Prostate gland (tissue), 2 donors: ENCODE measurements at regions of chr7 and their contacts with region 1.

Region 1: GRCh38 chr7:127514499-127514898 is 70.9 kb downstream of the GCC1 start:
- DNase-seq: peak; percentile 5
- H3K4me3 ChIP-seq: no peak overlapping the region
- H3K27ac ChIP-seq: no peak overlapping the region
- H3K4me1 ChIP-seq: no peaks in the 10 kb centered on the region
- H3K27me3 ChIP-seq: no peaks in the 10 kb centered on the region
- CTCF ChIP-seq: peak in 2 of 4 experiments; percentile 39 to 47
- POLR2A ChIP-seq: no peak

Region 2: DNA sequence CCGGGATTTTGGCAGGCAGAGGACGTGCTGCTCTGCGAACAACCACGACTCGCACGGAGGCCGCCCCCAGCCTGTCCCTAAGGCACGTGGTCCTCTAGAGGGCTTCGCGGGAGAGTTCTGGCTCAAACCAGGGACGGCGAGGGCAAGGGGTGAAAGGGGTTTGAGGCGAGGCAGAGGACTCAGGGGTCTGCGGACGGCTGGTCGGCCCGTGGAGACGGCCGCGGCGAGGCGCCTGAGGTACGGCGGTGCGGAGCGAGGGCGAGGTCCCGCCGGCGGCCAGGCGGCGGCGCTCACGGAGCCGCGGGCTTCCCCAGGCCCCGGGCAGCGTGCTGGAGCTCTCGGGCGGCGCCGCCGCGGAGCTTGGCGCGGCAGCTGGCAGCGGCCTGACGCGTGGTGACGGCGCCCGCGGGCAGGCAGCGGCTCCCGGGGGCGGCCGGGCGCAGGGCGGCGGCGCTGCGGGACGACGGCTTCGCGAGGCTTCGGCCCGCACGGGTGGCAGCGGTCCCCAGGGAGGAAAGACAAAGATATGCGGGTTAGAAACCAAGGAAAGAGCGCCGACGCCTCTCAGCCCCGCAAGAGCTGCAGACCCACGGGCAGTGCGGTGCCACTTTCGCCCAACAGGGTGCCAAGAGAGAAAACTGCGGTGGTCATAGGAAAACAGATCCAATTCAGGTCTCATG is 166.8 kb before region 1 on chr7:
- intact Hi-C with region 1: loop called (anchors 10 kb)
- DNase-seq: peak; percentile 57
- H3K4me3 ChIP-seq: peak overlapping the region; percentile 23
- H3K27ac ChIP-seq: no peak overlapping the region
- H3K4me1 ChIP-seq: no peaks in the 10 kb centered on the region
- H3K27me3 ChIP-seq: no peaks in the 10 kb centered on the region
- CTCF ChIP-seq: peak; percentile 16 to 74 (median 48)
- POLR2A ChIP-seq: no peak

Region 3: DNA sequence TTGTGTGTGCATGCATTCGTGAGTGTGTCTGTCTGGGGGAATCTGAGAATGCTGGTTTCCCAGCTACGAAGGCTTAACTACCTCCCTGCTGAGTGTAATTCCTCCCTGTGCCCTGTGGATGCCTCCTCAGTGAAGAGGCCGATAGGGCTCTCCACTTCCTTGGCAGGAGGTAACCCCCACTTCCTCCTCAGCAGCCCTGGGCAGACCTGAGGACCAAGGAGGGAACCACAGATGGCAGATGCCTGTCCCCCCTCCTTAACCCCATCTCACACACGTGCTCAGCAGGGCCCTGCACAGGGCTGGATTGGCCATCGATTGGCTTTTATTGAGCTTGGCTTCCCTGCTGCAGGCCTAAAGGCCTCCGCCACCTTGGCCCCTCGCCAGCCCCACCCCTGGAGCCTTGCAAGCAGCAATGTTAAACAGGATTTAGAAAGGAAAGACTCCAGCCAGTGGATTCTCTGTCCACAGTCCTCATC is 562.3 kb after region 1 on chr7:
- intact Hi-C with region 1: no loop called
- DNase-seq: peak; percentile 29
- H3K4me3 ChIP-seq: no peak overlapping the region
- H3K27ac ChIP-seq: no peak overlapping the region
- H3K4me1 ChIP-seq: no peaks in the 10 kb centered on the region
- H3K27me3 ChIP-seq: no peaks in the 10 kb centered on the region
- CTCF ChIP-seq: no peak
- POLR2A ChIP-seq: no peak